AG04450 (cell line): ENCODE measurements at regions of chr10 and their contacts with region 1.

Region 1: DNA sequence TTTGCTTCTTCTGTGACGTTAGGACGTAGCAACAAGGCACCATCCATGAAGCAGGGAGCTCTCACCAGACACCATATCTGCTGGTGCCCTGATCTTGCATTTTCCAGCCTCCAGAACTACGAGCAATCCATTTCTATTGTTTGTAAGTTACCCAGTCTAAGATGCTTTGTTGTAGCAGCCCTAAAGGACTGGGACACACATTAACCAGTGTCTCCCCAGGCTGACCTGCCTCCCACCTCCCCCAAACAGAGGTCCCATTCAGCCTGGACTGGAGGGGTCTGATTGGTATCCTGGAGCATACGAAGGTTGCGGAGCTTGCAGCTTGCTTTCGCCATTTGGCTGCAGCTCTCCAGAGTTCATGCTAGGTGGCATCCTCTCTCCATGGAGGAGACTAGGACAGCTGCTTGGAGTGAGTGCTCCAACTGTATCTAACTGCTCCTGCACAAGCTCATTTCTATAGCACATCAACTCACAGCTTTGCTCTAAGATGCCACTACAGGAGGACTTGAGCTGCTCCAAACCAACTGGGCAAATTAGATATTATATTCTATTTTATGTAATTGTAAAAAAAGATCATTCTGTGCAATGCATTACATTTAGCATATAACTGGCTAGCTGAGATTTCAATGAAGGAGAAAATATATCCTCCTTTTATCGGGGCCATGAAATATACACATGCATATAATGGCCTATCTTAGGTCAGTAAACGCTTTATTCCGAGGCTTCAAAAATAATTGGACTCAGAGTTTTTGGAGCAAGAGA is 8.0 kb upstream of the GRK5 start:
- DNase-seq: no peak
- H3K4me3 ChIP-seq: no peak overlapping the region
- H3K27ac ChIP-seq: no peak overlapping the region
- H3K27me3 ChIP-seq: no peaks in the 10 kb centered on the region
- CTCF ChIP-seq: peak; percentile 87

Region 2: DNA sequence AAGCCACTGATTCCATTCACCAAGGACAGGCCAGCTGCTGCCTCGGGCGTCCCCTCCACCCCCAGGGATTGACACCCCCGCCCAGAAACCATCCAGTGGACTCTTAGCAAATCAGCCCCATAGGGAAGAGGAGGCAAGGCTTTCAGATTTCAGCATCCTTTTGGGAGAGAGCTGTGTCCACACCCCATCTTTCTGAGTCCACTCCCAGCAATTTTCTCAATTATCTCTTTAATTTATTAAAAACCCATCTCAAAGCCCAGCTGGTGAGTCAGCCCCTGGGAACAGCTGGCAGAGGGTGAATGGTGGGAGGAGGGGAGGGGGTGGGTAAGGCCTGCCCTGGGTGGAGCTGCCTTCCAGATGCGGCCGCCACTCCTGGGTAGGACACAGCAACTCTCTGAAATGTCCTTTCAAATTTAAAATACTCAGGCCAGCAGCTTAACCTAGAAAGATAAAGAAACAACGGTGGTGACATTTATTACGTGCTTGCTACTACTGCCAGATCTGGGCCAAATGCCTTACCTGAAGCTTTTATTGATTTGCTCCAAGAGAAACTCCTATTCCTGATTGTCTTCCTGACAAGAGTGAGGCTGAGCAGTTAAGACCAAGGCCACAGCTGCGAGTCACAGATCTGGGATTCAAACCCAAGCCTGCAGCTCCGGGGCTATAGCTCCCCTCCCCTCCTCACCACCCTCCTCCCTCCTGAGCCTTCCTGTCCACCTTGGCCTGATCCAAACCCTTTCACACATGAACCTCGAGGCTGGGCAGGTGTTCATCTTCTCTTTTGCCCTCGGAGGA is 222.7 kb after region 1 on chr10:
- CTCF ChIA-PET with region 1: interaction called, 24 read pairs
- POLR2A ChIA-PET with region 1: no interaction called
- DNase-seq: no peak
- H3K4me3 ChIP-seq: no peak overlapping the region
- H3K27ac ChIP-seq: no peak overlapping the region
- H3K27me3 ChIP-seq: no peaks in the 10 kb centered on the region
- CTCF ChIP-seq: no peak

Region 3: GRCh38 chr10:119457966-119458766 is 258.8 kb after region 1 on chr10:
- CTCF ChIA-PET with region 1: interaction called, 10 read pairs
- POLR2A ChIA-PET with region 1: interaction called, 3 read pairs
- DNase-seq: no peak
- H3K4me3 ChIP-seq: no peak overlapping the region
- H3K27ac ChIP-seq: no peak overlapping the region
- H3K27me3 ChIP-seq: peaks cover 6% of the 10 kb centered on the region
- CTCF ChIP-seq: no peak

Region 4: DNA sequence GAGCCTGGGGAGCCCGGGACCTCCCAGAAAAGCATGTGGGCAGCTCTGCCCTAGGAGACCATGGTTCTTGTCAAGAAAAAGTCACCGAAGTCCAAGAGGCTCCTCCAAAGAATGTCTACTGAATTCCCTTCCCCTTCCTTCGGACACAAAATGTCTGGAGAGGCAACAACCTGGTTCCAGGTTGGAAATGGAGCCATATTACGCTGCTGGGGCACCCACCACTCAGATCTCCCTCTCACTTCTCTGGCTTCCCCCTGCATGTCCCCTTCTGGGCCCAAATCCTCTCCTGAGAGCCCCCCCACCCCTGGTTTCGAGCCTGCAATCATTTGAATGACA is 290.5 kb after region 1 on chr10:
- CTCF ChIA-PET with region 1: interaction called, 40 read pairs
- POLR2A ChIA-PET with region 1: interaction called, 5 read pairs
- DNase-seq: no peak
- H3K4me3 ChIP-seq: no peak overlapping the region
- H3K27ac ChIP-seq: no peak overlapping the region
- H3K27me3 ChIP-seq: no peaks in the 10 kb centered on the region
- CTCF ChIP-seq: no peak

Region 5: DNA sequence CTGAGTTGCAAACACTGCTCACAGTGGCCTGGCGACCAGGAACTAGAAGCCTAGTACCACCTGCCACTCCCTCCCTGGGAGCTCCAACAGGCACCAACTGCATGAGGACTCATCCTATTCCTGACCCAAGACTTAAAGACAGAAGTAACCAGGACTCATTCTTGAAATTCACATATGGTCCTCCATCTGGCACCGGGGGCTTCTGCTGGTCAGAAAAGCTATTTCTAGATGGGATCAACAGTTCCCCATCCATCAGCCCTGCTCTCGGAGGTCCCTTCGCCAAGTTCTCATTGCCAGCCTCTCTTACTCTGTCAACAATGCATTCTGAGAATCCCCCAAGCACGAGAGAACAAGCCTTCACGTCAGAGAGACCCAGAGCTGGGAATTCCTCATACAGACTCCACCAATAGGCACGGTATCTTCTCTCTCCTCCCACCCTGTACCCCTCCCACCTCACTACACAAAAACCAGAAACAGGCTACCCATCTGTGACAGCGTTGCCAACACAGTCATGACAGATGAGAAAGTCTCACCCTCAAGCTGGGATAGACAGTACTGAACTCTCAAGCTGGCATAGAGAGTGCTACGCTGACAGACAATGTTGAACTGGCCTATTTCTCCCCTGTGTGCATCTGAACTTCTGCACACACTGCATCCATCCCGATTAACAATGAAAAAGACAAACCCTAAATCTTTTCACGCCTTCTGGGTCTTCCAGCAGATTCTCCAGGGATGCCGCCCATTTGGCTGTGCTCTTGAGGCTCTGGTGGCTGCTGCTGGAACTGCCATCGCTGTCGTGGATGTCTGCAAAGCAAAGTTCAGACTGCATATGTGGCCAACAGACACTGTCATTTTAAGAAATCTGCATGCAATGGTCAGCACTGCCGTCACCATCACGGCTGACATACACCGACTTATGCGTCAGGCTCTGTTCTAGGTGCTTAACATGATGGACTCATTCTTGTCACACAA is 327.5 kb after region 1 on chr10:
- CTCF ChIA-PET with region 1: interaction called, 17 read pairs
- POLR2A ChIA-PET with region 1: no interaction called
- DNase-seq: no peak
- H3K4me3 ChIP-seq: no peak overlapping the region
- H3K27ac ChIP-seq: peak overlapping the region; percentile 66
- H3K27me3 ChIP-seq: no peaks in the 10 kb centered on the region
- CTCF ChIP-seq: peak; percentile 17; the same call in 1 of the 2 replicates

Region 6: DNA sequence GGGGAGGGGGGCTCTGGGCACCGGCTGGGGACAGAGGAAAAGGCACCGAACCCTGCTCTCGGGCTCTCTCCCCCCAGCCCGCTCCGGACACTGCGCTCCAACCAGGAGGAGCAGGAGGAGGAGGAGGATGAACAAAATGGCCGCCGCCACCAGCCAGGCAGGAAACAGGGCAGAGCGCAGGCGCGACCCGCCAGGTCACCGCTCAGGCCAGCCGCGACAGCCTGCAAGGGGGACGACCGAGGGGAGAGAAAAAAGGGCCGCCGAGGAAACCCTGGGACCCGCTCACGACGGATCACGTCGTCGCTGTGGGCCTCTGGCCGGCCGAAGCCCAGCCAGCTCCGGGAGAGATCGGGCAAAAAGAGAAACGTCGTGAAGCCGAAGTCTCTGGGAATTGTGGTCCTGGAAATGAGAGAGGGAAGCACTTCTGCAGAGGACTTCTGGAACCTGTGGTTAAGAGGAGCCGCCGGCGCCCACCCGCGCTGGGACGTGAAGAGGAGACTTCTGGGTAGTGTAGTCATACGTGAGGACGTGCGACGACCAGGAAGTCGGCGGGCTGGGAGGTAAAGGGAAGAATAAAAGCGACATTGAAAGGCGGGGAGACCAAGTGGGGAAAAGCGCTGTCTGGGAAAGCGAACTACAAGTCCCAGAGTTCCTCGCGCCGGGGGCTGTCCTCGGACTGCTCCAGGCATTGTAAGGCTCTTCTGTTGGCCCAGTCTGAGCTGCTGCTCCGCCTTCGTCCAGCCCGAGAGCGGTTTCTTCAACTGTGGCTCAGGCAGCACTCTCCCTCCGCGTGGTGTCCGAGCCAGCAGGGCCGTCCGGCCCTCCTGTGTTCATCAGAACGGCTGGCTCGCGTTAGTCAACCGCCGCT is 397.4 kb after region 1 on chr10 and contains the start of gene TIAL1:
- CTCF ChIA-PET with region 1: interaction called, 18 read pairs
- POLR2A ChIA-PET with region 1: no interaction called
- DNase-seq: peak; percentile 99
- H3K4me3 ChIP-seq: peak within 1 kb of the TSS; percentile 97
- H3K27ac ChIP-seq: peak within 1 kb of the TSS; percentile 99
- H3K27me3 ChIP-seq: no peaks in the 10 kb centered on the region
- CTCF ChIP-seq: no peak
- polyA plus RNA-seq, gene TIAL1: 86.0 and 113 TPM in 2 replicates